ENCODE measurements at regions of chr5 and their contacts with region 1.

Region 1: DNA sequence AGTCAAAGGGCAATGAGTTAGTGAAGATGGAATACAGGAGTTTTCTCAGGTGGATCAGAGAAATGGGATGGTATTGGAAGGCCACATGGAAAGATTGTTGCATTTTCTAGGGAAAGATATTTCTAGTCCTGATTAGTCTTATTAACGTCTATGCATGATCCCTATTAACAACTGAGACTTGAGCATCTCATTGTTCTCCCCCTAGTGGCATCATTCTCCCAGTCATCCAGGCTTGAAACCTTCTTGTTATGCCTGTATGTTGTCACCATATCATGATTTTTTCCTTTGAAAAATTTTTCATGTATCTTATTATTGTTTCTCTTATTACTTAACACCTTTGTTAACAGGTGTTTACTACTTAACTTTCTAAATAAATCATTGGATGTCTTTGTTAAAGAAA is 34.4 kb downstream of the KIF2A start:
- DNase-seq: peak in 1 of 5 donors; percentile 16
- H3K4me3 ChIP-seq: no peak overlapping the region
- H3K4me3 Mint-ChIP-seq: no peak overlapping the region
- H3K27ac ChIP-seq: no peak overlapping the region
- H3K27ac Mint-ChIP-seq: peak overlapping the region in 6 of 8 donors; percentile 0 to 29 (median 22)
- H3K4me1 ChIP-seq: peaks cover 28% of the 10 kb centered on the region
- H3K4me1 Mint-ChIP-seq: peaks cover 58 to 82% (median 76%) of the 10 kb centered on the region in 3 donors
- H3K27me3 ChIP-seq: no peaks in the 10 kb centered on the region
- H3K27me3 Mint-ChIP-seq: no peaks in the 10 kb centered on the region

Region 2: GRCh38 chr5:62297026-62297425 is 43.4 kb before region 1 on chr5:
- CTCF ChIA-PET with region 1: interaction called, 10 read pairs
- POLR2A ChIA-PET with region 1: no interaction called
- DNase-seq: peak in 1 of 5 donors; percentile 44
- H3K4me3 ChIP-seq: no peak overlapping the region
- H3K4me3 Mint-ChIP-seq: peak overlapping the region; percentile 34 to 85 (median 70)
- H3K27ac ChIP-seq: no peak overlapping the region
- H3K27ac Mint-ChIP-seq: peak overlapping the region in 7 of 8 donors; percentile 46 to 80 (median 63)
- H3K4me1 ChIP-seq: peaks cover 55% of the 10 kb centered on the region
- H3K4me1 Mint-ChIP-seq: peaks cover 58 to 82% (median 75%) of the 10 kb centered on the region in 3 donors
- H3K27me3 ChIP-seq: no peaks in the 10 kb centered on the region
- H3K27me3 Mint-ChIP-seq: no peaks in the 10 kb centered on the region

Region 3: GRCh38 chr5:62314213-62314830 is 26.1 kb before region 1 on chr5:
- CTCF ChIA-PET with region 1: interaction called, 3 read pairs
- POLR2A ChIA-PET with region 1: interaction called, 10 read pairs
- DNase-seq: no peak
- H3K4me3 ChIP-seq: no peak overlapping the region
- H3K4me3 Mint-ChIP-seq: peak overlapping the region in 6 of 7 donors; percentile 29 to 53 (median 42)
- H3K27ac ChIP-seq: no peak overlapping the region
- H3K27ac Mint-ChIP-seq: peak overlapping the region; percentile 51 to 87 (median 75)
- H3K4me1 ChIP-seq: peaks cover 92% of the 10 kb centered on the region
- H3K4me1 Mint-ChIP-seq: peaks cover 86 to 95% (median 92%) of the 10 kb centered on the region in 3 donors
- H3K27me3 ChIP-seq: no peaks in the 10 kb centered on the region
- H3K27me3 Mint-ChIP-seq: no peaks in the 10 kb centered on the region